ENCODE measurements at regions of chr9 and their contacts with region 1.

Region 1: GRCh38 chr9:15529566-15530324 is 19.0 kb upstream of the PSIP1 start:
- DNase-seq: no peak
- H3K4me3 Mint-ChIP-seq: no peak overlapping the region
- H3K27ac Mint-ChIP-seq: no peak overlapping the region
- H3K4me1 Mint-ChIP-seq: peaks cover 9% of the 10 kb centered on the region
- H3K27me3 Mint-ChIP-seq: no peaks in the 10 kb centered on the region

Region 2: DNA sequence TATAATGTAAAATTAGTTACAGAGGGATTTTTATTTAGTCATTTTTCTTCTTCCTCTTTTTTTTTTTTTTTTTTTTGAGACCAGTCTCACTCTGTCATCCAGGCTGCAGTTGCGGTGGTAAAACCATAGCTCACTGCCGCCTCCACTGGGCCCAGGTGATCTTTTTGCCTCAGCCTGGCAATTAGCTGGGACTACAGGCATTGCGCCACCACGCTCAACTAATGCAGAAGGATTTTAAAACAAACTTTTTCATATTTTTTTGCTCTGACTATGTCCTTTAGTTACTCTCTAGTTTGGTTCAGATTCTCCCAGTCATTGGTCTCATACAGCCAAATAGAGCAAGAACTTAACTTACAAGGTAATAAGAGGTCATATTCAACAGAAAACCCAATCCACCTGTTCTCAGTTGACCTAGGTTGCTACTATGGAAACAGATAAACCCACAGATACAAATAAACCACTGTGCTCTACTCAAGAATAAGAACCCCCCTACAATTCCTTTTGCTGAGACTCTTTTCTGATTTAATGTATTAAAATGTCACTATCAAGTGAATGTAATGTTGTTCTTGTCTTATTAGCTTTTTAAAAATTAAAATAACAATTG is 172.6 kb before region 1 on chr9:
- CTCF ChIA-PET with region 1: no interaction called
- POLR2A ChIA-PET with region 1: no interaction called
- intact Hi-C with region 1: loop called (anchors 1 kb)
- DNase-seq: peak; percentile 16
- H3K4me3 Mint-ChIP-seq: no peak overlapping the region
- H3K27ac Mint-ChIP-seq: no peak overlapping the region
- H3K4me1 Mint-ChIP-seq: peaks cover 8% of the 10 kb centered on the region
- H3K27me3 Mint-ChIP-seq: no peaks in the 10 kb centered on the region

Region 3: DNA sequence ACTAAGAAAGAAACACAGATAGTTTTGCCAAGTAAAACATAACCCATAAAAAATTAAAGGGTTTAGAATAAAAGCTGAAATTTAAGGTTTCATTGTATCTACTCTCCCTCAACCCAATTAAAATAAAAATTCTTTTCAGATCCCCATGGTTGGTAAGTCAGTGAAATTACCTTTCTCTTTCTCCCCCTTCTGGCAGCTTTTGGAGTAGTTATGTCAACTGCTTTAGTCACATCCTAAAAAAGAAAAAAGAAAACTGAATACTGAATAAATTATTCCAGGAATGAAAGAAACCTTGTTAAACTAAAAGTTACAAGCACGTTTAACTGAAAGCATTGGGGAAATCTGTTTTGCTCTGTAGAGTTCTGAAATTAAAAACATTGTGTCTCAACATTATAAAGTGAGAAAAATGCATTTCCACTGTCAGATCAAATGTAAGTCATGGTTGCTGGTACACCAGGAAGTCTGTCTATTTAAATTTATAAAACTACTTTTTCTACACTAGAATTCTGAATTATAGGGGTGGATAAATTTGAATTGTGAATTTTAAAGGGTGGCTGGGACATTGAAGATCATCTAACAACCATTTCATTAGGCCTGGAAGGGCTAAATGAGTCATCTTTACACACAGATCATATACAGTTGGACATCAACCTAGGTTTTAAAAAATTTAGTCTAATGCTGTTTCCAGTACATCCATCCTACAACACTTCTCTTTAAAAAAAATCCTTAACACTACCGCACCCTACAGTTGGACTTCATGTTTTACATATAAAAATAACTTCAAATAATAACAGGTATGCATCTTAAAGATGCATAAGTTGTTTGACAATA is 43.7 kb before region 1 on chr9:
- CTCF ChIA-PET with region 1: interaction called, 3 read pairs
- POLR2A ChIA-PET with region 1: no interaction called
- intact Hi-C with region 1: loop called (anchors 2 kb)
- DNase-seq: no peak
- H3K4me3 Mint-ChIP-seq: no peak overlapping the region
- H3K27ac Mint-ChIP-seq: peak overlapping the region; percentile 49
- H3K4me1 Mint-ChIP-seq: peaks cover 37% of the 10 kb centered on the region
- H3K27me3 Mint-ChIP-seq: no peaks in the 10 kb centered on the region

Region 4: GRCh38 chr9:15743512-15743911 is 213.8 kb after region 1 on chr9:
- CTCF ChIA-PET with region 1: no interaction called
- POLR2A ChIA-PET with region 1: no interaction called
- intact Hi-C with region 1: no loop called
- DNase-seq: no peak
- H3K4me3 Mint-ChIP-seq: no peak overlapping the region
- H3K27ac Mint-ChIP-seq: no peak overlapping the region
- H3K4me1 Mint-ChIP-seq: no peaks in the 10 kb centered on the region
- H3K27me3 Mint-ChIP-seq: no peaks in the 10 kb centered on the region

Measured in activated CD4-positive, alpha-beta memory T cell treated with anti-CD3 and anti-CD28 coated beads for 36 hours (primary cell).